HEK293 (cell line): ENCODE measurements at regions of chr20 and their contacts with region 1.

Region 1: GRCh38 chr20:44683263-44684046 is 31.7 kb upstream of the CCN5 start:
- H3K4me3 ChIP-seq: no peak overlapping the region
- H3K27ac ChIP-seq: no peak overlapping the region
- H3K4me1 ChIP-seq: no peaks in the 10 kb centered on the region; the same call in 1 of the 2 replicates
- CTCF ChIP-seq: peak; percentile 52; the same call in 1 of the 2 replicates

Region 2: DNA sequence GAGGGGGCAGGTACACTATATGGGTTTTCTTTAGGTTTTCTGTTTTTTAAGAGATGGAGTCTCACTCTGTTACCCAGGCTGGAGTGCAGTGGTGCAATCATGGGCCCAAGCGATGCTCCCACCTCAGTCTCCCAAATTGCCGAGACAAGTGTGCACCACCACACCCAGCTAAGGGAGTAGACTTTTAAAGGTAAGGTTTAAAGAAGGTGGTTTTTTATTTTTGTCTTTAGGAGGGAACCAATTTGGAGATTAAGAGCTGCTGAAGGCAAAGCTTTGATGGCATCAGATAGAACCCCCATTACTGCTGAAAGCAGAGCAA is 1217.9 kb before region 1 on chr20:
- CTCF ChIA-PET with region 1: no interaction called
- POLR2A ChIA-PET with region 1: interaction called, 10 read pairs
- H3K4me3 ChIP-seq: no peak overlapping the region
- H3K27ac ChIP-seq: no peak overlapping the region
- H3K4me1 ChIP-seq: no peaks in the 10 kb centered on the region
- CTCF ChIP-seq: no peak

Region 3: DNA sequence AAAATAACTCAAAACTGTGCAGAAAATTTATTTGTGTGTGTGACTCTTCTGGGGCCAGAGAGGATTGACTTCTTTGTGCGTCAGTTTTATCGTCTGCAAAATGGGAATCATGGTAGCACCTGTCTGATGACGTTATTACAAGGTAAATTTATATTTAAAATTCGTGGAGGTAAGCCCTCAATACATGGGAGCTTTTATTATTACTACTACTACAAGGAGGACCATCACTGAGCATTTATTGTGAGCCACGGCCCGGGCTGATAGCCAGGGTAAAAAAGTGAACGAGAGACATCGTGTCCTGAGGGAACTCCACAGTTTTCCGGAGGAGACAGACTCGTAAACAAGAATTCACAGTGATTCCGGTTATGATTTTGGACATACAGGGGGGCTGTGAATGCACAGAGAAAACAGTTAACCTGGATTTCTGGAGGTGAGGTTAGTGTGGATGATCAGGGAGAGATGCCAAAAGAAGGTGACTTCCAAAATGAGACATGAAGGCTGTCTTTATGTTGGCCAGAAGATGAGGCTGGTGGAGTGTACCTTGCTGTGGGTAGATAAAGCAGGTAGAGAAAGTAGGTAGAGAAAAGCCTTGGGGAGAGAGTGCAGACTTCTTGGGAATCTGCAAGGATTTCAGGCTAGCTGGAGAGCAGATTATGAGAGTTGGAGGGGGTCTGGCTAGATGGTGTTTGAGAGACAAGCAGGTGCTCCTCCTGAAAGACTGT is 151.0 kb before region 1 on chr20:
- CTCF ChIA-PET with region 1: no interaction called
- POLR2A ChIA-PET with region 1: no interaction called
- H3K4me3 ChIP-seq: peak overlapping the region; percentile 69
- H3K27ac ChIP-seq: no peak overlapping the region
- H3K4me1 ChIP-seq: peaks cover 6% of the 10 kb centered on the region; the same call in 1 of the 2 replicates
- CTCF ChIP-seq: no peak

Region 4: DNA sequence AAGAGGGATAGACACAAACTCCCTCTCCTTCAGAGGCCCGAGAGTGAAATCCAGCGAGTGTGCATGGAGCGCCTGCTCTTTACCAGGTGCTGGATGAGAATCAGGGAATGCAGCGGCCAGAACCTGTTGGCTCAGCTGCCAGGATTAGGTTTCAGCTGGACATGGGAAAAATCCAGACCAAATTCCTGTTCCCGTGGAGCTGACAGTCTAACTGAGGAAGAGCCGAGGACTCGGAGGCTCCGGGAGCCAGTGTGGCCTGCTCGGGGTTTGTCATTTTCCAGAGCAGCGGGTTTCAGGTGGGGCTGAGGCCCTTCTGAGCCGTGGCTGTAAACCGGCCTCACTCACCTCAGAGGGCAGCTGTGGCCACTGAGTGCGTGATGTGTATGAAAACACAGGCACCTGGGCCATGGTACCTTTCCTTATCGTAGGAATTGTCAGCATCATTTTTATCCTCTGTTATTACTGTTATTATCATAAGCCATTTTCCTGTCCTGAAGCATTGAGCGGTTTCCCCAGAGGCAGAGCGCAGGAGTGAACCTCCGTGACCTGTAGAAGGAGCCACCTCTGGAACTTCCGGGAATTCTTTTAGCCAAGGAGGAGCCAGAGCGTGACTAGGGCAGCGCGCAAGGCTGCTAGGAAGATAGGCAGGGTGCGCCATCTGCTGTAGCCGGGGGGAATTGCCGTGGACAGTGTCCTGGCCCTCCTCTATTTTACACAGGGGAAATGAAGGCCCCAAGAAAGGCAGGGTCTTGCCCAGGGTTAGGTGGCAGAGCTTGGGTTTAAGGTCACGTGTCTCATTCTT is 73.7 kb before region 1 on chr20:
- CTCF ChIA-PET with region 1: interaction called, 17 read pairs
- POLR2A ChIA-PET with region 1: no interaction called
- H3K4me3 ChIP-seq: no peak overlapping the region
- H3K27ac ChIP-seq: no peak overlapping the region
- H3K4me1 ChIP-seq: no peaks in the 10 kb centered on the region
- CTCF ChIP-seq: peak; percentile 97

Region 5: GRCh38 chr20:44720617-44720993 is 37.1 kb after region 1 on chr20:
- CTCF ChIA-PET with region 1: interaction called, 11 read pairs
- POLR2A ChIA-PET with region 1: no interaction called
- H3K4me3 ChIP-seq: no peak overlapping the region
- H3K27ac ChIP-seq: no peak overlapping the region
- H3K4me1 ChIP-seq: peaks cover 6% of the 10 kb centered on the region
- CTCF ChIP-seq: no peak

Region 6: GRCh38 chr20:44738813-44739477 is 55.5 kb after region 1 on chr20:
- CTCF ChIA-PET with region 1: interaction called, 208 read pairs
- POLR2A ChIA-PET with region 1: no interaction called
- H3K4me3 ChIP-seq: no peak overlapping the region
- H3K27ac ChIP-seq: no peak overlapping the region
- H3K4me1 ChIP-seq: no peaks in the 10 kb centered on the region
- CTCF ChIP-seq: no peak

Region 7: GRCh38 chr20:44861531-44862006 is 178.1 kb after region 1 on chr20:
- CTCF ChIA-PET with region 1: interaction called, 34 read pairs
- POLR2A ChIA-PET with region 1: no interaction called
- H3K4me3 ChIP-seq: no peak overlapping the region
- H3K27ac ChIP-seq: peak overlapping the region; percentile 24; the same call in 1 of the 2 replicates
- H3K4me1 ChIP-seq: no peaks in the 10 kb centered on the region
- CTCF ChIP-seq: no peak

Region 8: GRCh38 chr20:44928595-44928994 is 245.1 kb after region 1 on chr20:
- CTCF ChIA-PET with region 1: no interaction called
- POLR2A ChIA-PET with region 1: no interaction called
- H3K4me3 ChIP-seq: no peak overlapping the region
- H3K27ac ChIP-seq: no peak overlapping the region
- H3K4me1 ChIP-seq: no peaks in the 10 kb centered on the region
- CTCF ChIP-seq: no peak